ENCODE measurements at regions of chr2 and their contacts with region 1.

Region 1: DNA sequence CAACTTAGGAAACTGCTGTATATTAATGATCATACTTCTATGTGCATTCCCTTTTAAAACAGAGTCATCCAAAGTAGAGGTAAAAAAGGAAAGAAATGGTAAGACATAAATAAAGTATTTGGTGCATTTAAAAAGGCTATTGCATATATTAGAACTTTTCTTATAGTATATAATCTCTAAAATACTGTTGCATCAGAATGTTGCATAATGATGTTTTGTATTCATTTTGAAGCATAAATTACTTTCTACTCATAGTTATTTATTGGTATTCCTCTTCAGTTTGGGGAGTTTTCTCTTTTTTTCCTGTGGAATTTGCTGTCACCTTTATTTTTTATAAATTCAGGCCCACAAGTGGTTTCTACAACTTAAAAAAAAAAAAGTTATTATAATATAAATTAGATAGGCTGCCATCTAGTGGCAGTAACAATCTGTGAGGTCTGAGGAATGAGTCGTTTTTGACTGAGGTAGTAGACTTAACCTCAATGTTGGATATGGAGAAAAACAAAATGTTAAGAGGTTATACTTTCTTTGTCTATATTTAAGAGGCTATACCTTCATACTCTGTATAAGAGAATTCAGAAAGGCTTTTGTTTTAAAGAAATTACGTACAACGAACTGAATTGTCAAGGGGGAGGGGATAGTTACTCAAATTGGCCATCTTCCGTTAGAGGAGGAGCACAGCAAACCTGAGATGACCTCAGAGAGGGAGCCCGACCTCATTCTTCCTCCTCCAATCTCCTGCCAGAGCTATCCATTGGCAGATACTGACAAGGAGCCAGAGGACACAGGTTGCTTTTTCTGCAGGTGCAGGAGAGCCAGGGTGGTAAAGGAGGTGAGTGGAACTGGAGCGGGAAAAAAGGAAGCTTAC is 23.8 kb downstream of the ANKAR start:
- DNase-seq: peak in 1 of 2 experiments; percentile 44
- H3K4me3 ChIP-seq: peak overlapping the region in 3 of 4 experiments; percentile 6 to 59 (median 12); a peak in 4 of 8 replicates
- H3K27ac ChIP-seq: no peak overlapping the region
- H3K4me1 ChIP-seq: no peaks in the 10 kb centered on the region
- H3K27me3 ChIP-seq: no peaks in the 10 kb centered on the region
- CTCF ChIP-seq: no peak; a peak in 1 of 4 replicates
- EP300 ChIP-seq: no peak
- POLR2A ChIP-seq: no peak
- RAD21 ChIP-seq: no peak

Region 2: GRCh38 chr2:189674374-189675112 is 23.7 kb before region 1 on chr2 and contains the start of gene ANKAR:
- CTCF ChIA-PET with region 1: interaction called, 56 read pairs
- POLR2A ChIA-PET with region 1: interaction called, 4 read pairs
- DNase-seq: peak; percentile 83 to 96
- H3K4me3 ChIP-seq: peak within 1 kb of the TSS; percentile 72 to 87 (median 78)
- H3K27ac ChIP-seq: peak within 1 kb of the TSS; percentile 69; the same call in 1 of the 2 replicates
- H3K4me1 ChIP-seq: peaks cover 0 to 4% (median 0%) of the 10 kb centered on the region in 4 experiments; a peak in 3 of 7 replicates
- H3K27me3 ChIP-seq: no peaks in the 10 kb centered on the region; a peak in 1 of 7 replicates
- CTCF ChIP-seq: peak; percentile 80 to 92 (median 89)
- EP300 ChIP-seq: no peak; a peak in 1 of 3 replicates
- POLR2A ChIP-seq: peak; percentile 58 to 81; a peak in 2 of 3 replicates
- RAD21 ChIP-seq: peak; percentile 52 to 64
- total RNA-seq, gene ANKAR: 1.5 and 1.7 TPM in 2 replicates

Region 3: GRCh38 chr2:189683363-189683762 is 14.9 kb before region 1 on chr2:
- CTCF ChIA-PET with region 1: interaction called, 13 read pairs
- POLR2A ChIA-PET with region 1: no interaction called
- DNase-seq: no peak
- H3K4me3 ChIP-seq: no peak overlapping the region
- H3K27ac ChIP-seq: no peak overlapping the region
- H3K4me1 ChIP-seq: 0 out of 7 replicates have a peak, but pooled peaks cover 0 to 3% (median 0%) of the 10 kb centered on the region in 4 experiments
- H3K27me3 ChIP-seq: no peaks in the 10 kb centered on the region
- CTCF ChIP-seq: no peak
- EP300 ChIP-seq: no peak
- POLR2A ChIP-seq: no peak
- RAD21 ChIP-seq: no peak

Region 4: GRCh38 chr2:189709501-189710221 is 11.4 kb after region 1 on chr2:
- CTCF ChIA-PET with region 1: interaction called, 10 read pairs
- POLR2A ChIA-PET with region 1: no interaction called
- DNase-seq: no peak
- H3K4me3 ChIP-seq: no peak overlapping the region
- H3K27ac ChIP-seq: no peak overlapping the region
- H3K4me1 ChIP-seq: no peaks in the 10 kb centered on the region; a peak in 1 of 7 replicates
- H3K27me3 ChIP-seq: peaks cover 0 to 1% (median 0%) of the 10 kb centered on the region in 4 experiments; a peak in 1 of 7 replicates
- CTCF ChIP-seq: no peak
- EP300 ChIP-seq: no peak
- POLR2A ChIP-seq: no peak
- RAD21 ChIP-seq: no peak